Right ventricle myocardium superior (tissue), 1 donor: ENCODE measurements at regions of chr9 and their contacts with region 1.

Region 1: DNA sequence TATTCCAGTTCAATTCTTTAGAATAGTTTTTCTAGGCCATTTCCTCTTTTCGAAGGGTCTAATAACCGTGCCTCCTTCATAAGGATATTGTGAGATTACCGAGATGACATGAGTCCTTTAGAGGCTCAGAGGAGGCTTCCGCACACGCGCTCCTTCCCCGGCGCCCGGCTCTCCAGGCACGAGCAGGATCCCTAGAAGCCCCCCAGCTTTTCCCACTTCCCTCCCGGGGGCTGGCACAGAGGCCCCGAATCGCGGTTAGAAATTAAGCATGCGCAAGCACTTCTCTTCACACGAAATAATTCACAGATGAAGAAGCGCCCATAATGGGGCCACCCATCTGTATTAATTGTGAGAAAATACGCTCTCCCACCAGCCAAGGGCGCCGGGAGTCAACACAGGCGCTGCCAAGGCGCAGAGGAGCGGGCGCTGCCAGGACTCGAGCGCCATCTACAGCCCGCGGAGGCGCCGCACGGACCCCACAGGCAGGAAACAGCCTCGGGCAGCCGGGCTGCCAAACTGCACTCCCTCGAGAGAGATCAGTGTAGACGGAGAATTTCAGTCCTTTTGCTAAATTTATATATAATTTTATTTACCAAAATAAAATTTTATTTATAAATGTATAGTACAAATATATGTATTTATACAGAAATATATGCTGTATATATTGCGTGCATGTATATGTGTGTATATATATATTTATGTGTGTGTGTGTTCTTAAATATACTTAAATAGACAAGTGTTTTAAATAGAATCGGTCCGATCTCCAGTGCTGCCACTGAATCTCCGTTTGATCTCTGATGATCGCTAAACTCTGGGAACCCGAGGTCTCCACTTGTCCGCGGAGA is 258.1 kb upstream of the NFIL3 start:
- DNase-seq: peak; percentile 86
- ATAC-seq: peak; percentile 99

Region 2: DNA sequence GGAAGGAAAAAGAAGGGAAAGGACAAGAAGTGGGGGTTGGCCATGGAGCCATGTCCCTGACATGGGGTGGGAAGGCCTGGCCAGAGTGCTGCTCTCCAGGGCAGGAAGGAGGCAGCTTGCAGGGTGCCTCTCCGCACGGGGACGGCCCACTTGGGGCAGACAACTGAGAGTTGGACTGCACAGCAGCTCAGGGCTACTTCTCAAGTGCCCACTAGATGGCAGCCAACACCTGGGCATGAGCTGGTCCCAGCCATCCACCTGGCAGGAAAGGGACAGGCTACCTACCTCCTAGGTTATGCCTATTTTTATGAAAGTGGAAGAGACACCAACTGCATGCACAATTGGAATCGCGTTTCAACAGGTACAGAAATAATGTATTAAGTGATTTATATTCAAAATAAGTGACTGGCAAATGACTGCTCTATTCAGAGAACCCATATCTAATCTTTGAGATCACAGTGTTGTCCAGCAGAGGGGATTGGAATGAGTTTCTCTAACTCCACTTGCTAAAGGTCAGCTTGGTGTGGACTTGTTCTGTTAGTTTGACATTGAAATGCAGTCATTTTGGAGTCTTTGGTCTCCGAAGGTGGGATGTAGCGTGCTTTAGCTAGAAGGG is 766.7 kb before region 1 on chr9:
- intact Hi-C with region 1: loop called (anchors 10 kb)
- DNase-seq: peak; percentile 75
- ATAC-seq: peak; percentile 93

Region 3: GRCh38 chr9:91433180-91433579 is 248.5 kb before region 1 on chr9:
- intact Hi-C with region 1: loop called (anchors 10 kb)
- DNase-seq: no peak
- ATAC-seq: peak; percentile 76